Tibial artery (tissue), 4 donors: ENCODE measurements at regions of chr2 and their contacts with region 1.

Region 1: GRCh38 chr2:96514521-96514920 is 9.4 kb upstream of the NEURL3 start:
- DNase-seq: peak in 1 of 2 donors; percentile 38
- H3K4me3 ChIP-seq: no peak overlapping the region
- H3K27ac ChIP-seq: no peak overlapping the region
- H3K4me1 ChIP-seq: peaks cover 0 to 1% (median 0%) of the 10 kb centered on the region in 4 donors
- H3K27me3 ChIP-seq: no peaks in the 10 kb centered on the region
- CTCF ChIP-seq: no peak

Region 2: GRCh38 chr2:96024336-96025193 is 490.0 kb before region 1 on chr2:
- intact Hi-C with region 1: loop called (anchors 10 kb)
- DNase-seq: no peak
- H3K4me3 ChIP-seq: no peak overlapping the region
- H3K27ac ChIP-seq: no peak overlapping the region
- H3K4me1 ChIP-seq: peaks cover 0 to 4% (median 0%) of the 10 kb centered on the region in 4 donors
- H3K27me3 ChIP-seq: no peaks in the 10 kb centered on the region
- CTCF ChIP-seq: no peak

Region 3: DNA sequence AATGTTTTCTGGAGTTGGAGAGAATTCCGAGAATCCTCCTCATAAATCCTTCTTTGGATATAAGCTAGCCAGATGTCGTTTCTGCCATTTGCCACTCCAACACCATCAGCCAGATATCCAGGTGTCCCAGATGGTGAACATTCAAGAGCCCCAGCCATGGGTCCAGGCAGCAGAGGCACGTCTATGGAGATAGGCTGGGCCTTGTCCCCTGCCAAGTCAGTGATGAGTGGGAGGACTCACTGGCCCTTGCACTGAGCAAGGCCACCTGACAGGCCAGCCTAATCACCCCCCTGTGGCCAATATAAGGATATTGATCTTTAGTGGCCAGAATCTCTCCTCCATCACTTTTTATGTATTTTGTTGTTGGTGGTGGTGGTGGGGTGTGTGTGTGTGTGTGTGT is 50.0 kb after region 1 on chr2:
- intact Hi-C with region 1: loop called (anchors 5 kb)
- DNase-seq: no peak
- H3K4me3 ChIP-seq: no peak overlapping the region
- H3K27ac ChIP-seq: no peak overlapping the region
- H3K4me1 ChIP-seq: no peaks in the 10 kb centered on the region
- H3K27me3 ChIP-seq: no peaks in the 10 kb centered on the region
- CTCF ChIP-seq: no peak

Region 4: GRCh38 chr2:96618604-96619283 is 104.2 kb after region 1 on chr2:
- intact Hi-C with region 1: no loop called
- DNase-seq: peak in 1 of 2 donors; percentile 62
- H3K4me3 ChIP-seq: no peak overlapping the region
- H3K27ac ChIP-seq: peak overlapping the region; percentile 18 to 50
- H3K4me1 ChIP-seq: peaks cover 0 to 37% (median 10%) of the 10 kb centered on the region in 4 donors
- H3K27me3 ChIP-seq: no peaks in the 10 kb centered on the region
- CTCF ChIP-seq: no peak